Mammary epithelial cell (primary cell): ENCODE measurements at regions of chr2 and their contacts with region 1.

Region 1: GRCh38 chr2:149597668-149598326 is 10.2 kb upstream of the MMADHC start:
- DNase-seq: peak; percentile 82
- H3K4me3 ChIP-seq: peak overlapping the region in 2 of 3 experiments; percentile 18 to 28
- H3K27ac ChIP-seq: peak overlapping the region; percentile 47
- H3K4me1 ChIP-seq: peaks cover 18% of the 10 kb centered on the region
- H3K27me3 ChIP-seq: no peaks in the 10 kb centered on the region
- CTCF ChIP-seq: peak; percentile 72 to 83

Region 2: DNA sequence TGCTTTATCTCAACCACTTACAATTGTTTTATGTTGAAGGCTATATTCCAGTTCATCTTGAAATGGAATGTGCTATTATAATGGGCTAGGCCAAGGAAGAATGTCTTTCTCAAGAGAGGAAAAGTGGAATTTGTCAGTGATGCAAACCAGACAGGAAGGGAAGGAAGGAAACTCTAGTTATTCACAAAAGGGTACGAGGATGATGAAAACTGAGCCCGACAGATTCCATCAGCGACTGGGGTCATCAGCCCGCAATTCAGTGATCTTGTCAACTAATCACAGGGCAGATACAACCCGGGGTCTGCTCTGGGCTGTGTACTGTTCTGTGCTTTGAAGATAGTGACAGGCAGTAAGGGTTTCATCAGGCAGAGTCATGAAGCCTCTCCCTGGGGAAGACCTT is 290.8 kb before region 1 on chr2:
- CTCF ChIA-PET with region 1: no interaction called
- dilution Hi-C with region 1: no loop called
- in situ Hi-C with region 1: no loop called
- intact Hi-C with region 1: no loop called
- DNase-seq: no peak
- H3K4me3 ChIP-seq: no peak overlapping the region
- H3K27ac ChIP-seq: no peak overlapping the region
- H3K4me1 ChIP-seq: no peaks in the 10 kb centered on the region
- H3K27me3 ChIP-seq: peaks cover 4% of the 10 kb centered on the region
- CTCF ChIP-seq: no peak

Region 3: DNA sequence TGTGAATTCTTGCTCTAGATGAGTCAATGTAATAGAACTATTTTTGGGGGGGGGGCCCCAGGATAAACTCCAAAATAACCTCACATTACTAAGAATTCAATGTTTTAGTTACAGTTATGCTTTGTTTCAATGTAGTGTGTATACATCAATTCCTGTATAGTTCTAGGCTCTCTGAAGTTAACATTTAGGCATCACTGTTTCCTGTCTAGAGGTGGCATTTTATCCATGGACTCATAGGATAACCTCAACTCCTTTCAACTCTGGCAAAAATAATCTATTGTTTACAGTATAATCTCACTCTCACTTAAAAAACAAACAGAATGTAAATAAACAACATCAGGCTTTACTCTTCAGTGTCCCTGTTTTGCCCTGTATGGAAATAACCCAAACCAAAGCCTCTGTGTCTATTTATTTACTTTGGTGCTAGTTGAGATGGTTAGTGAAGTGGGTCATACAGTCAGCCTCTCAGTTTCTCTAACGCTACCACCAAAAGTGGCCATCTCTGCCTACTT is 69.1 kb after region 1 on chr2:
- CTCF ChIA-PET with region 1: no interaction called
- dilution Hi-C with region 1: no loop called
- in situ Hi-C with region 1: no loop called
- intact Hi-C with region 1: no loop called
- DNase-seq: no peak
- H3K4me3 ChIP-seq: no peak overlapping the region
- H3K27ac ChIP-seq: no peak overlapping the region
- H3K4me1 ChIP-seq: peaks cover 7% of the 10 kb centered on the region
- H3K27me3 ChIP-seq: no peaks in the 10 kb centered on the region
- CTCF ChIP-seq: no peak

Region 4: DNA sequence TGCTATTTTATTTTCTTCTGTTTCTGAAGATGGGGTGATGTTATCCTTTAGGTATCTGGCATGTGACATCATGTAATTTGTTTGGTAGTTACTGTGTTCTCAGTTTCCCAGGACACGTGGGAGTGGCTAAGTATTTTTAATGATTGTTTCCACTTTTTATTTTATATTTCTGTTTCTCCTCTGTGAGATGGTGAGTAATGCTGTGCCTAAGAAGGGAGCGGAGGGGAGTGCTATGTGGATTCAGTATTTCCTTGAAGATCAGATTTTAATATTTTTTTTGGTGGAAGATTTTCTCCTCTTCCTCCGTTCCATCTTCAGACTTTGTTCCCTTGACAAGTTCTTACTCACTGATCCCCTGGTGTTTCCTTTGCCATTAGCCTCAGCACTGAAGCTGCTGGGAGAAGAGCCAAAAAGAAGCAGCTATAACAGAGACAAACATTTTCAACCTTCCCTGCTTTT is 169.7 kb after region 1 on chr2:
- CTCF ChIA-PET with region 1: no interaction called
- dilution Hi-C with region 1: no loop called
- in situ Hi-C with region 1: no loop called
- intact Hi-C with region 1: loop called (anchors 1 kb)
- DNase-seq: peak; percentile 58
- H3K4me3 ChIP-seq: no peak overlapping the region
- H3K27ac ChIP-seq: peak overlapping the region; percentile 37
- H3K4me1 ChIP-seq: peaks cover 12% of the 10 kb centered on the region
- H3K27me3 ChIP-seq: no peaks in the 10 kb centered on the region
- CTCF ChIP-seq: no peak

Region 5: DNA sequence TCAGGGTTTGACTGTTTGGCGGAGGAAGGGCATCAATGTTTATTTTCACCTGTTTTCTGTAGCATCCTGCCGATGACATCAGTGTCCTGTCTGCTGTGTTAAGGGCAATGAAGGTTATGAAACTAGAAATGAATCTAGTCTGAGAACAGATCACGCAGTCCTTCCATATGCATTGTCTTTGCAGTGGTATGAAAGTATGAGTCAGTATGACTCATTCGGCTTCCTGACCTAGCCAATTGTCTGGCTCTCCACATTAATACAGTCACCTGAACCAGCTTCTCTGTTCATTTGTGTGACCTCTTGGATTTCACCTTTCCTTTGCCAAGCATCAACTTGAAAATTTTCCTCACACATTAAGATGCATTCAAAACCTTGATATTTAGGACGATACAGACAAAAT is 535.8 kb after region 1 on chr2:
- CTCF ChIA-PET with region 1: no interaction called
- dilution Hi-C with region 1: no loop called
- in situ Hi-C with region 1: no loop called
- intact Hi-C with region 1: loop called (anchors 2 kb)
- DNase-seq: peak; percentile 98
- H3K4me3 ChIP-seq: no peak overlapping the region
- H3K27ac ChIP-seq: peak overlapping the region; percentile 84
- H3K4me1 ChIP-seq: peaks cover 24% of the 10 kb centered on the region
- H3K27me3 ChIP-seq: no peaks in the 10 kb centered on the region
- CTCF ChIP-seq: no peak

Region 6: GRCh38 chr2:150478200-150478974 is 880.6 kb after region 1 on chr2:
- CTCF ChIA-PET with region 1: no interaction called
- dilution Hi-C with region 1: no loop called
- in situ Hi-C with region 1: loop called in 1 of 2 experiments (anchors 5 kb)
- intact Hi-C with region 1: loop called (anchors 2 kb)
- DNase-seq: peak; percentile 54
- H3K4me3 ChIP-seq: peak overlapping the region; percentile 3 to 30 (median 21)
- H3K27ac ChIP-seq: peak overlapping the region; percentile 100
- H3K4me1 ChIP-seq: peaks cover 88% of the 10 kb centered on the region
- H3K27me3 ChIP-seq: no peaks in the 10 kb centered on the region
- CTCF ChIP-seq: no peak

Region 7: DNA sequence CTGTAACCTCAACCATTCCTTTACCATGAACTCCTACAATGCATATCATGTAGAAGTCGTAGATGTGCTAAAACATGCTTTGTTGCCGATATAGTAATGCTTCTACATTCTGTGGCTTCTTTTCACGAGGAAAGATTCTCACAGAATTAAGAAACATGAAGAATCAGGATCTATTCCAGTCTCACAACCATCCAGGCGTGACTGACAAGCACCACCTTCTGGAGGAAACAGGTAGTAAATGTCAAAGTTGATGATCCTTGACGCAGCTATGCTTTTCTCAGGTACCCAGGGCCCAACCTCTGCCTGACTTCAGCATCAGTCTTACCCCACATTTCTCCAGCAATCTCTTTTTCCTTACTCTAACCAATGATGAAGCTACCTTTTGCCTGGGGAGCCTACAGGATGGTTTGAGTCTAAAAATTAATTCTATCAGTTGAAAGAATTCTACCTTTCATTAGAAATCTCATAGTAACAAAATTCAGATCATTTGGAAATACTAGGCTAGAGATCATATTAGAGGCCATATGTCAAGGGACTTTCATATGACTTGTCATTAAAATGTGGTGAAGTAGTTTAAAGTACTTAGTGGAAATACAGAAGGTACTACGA is 1013.0 kb after region 1 on chr2:
- CTCF ChIA-PET with region 1: no interaction called
- dilution Hi-C with region 1: no loop called
- in situ Hi-C with region 1: loop called (anchors 10 to 25 kb)
- intact Hi-C with region 1: loop called (anchors 2 kb)
- DNase-seq: peak; percentile 70
- H3K4me3 ChIP-seq: no peak overlapping the region
- H3K27ac ChIP-seq: no peak overlapping the region
- H3K4me1 ChIP-seq: no peaks in the 10 kb centered on the region
- H3K27me3 ChIP-seq: no peaks in the 10 kb centered on the region
- CTCF ChIP-seq: peak; percentile 69 to 87

Region 8: GRCh38 chr2:151051574-151052220 is 1453.9 kb after region 1 on chr2:
- CTCF ChIA-PET with region 1: no interaction called
- dilution Hi-C with region 1: no loop called
- in situ Hi-C with region 1: no loop called
- intact Hi-C with region 1: loop called (anchors 10 kb)
- DNase-seq: peak; percentile 60
- H3K4me3 ChIP-seq: no peak overlapping the region
- H3K27ac ChIP-seq: no peak overlapping the region
- H3K4me1 ChIP-seq: peaks cover 29% of the 10 kb centered on the region
- H3K27me3 ChIP-seq: no peaks in the 10 kb centered on the region
- CTCF ChIP-seq: peak; percentile 85 to 86

Region 9: DNA sequence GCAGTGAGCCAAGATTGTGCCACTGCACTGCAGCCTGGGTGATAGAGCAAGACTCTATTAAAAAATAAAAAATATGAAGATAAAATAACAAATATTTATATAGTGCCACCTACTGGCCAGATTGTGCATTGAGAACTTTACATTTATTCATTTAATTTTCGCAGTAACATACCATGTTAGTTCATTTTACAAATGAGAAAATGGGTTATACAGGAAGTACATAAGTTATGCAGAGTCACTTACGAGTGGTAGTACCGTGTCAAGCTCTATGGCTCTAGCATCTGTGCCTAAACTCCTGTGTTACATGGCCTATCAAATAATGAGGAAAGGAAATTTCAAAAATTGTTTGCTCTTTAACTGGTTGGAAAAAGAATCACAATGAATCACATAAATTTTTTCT is 1839.8 kb after region 1 on chr2:
- CTCF ChIA-PET with region 1: interaction called, 6 read pairs
- dilution Hi-C with region 1: no loop called
- in situ Hi-C with region 1: no loop called
- intact Hi-C with region 1: loop called (anchors 10 kb)
- DNase-seq: peak; percentile 4
- H3K4me3 ChIP-seq: no peak overlapping the region
- H3K27ac ChIP-seq: no peak overlapping the region
- H3K4me1 ChIP-seq: no peaks in the 10 kb centered on the region
- H3K27me3 ChIP-seq: no peaks in the 10 kb centered on the region
- CTCF ChIP-seq: peak; percentile 32 to 47